AG04450 (cell line): ENCODE measurements at regions of chr6 and their contacts with region 1.

Region 1: GRCh38 chr6:30357678-30358540 is 13.0 kb downstream of the RPP21 start:
- DNase-seq: peak; percentile 36
- H3K4me3 ChIP-seq: peak overlapping the region; percentile 58
- H3K27ac ChIP-seq: no peak overlapping the region
- H3K27me3 ChIP-seq: peaks cover 48% of the 10 kb centered on the region
- CTCF ChIP-seq: peak; percentile 82

Region 2: DNA sequence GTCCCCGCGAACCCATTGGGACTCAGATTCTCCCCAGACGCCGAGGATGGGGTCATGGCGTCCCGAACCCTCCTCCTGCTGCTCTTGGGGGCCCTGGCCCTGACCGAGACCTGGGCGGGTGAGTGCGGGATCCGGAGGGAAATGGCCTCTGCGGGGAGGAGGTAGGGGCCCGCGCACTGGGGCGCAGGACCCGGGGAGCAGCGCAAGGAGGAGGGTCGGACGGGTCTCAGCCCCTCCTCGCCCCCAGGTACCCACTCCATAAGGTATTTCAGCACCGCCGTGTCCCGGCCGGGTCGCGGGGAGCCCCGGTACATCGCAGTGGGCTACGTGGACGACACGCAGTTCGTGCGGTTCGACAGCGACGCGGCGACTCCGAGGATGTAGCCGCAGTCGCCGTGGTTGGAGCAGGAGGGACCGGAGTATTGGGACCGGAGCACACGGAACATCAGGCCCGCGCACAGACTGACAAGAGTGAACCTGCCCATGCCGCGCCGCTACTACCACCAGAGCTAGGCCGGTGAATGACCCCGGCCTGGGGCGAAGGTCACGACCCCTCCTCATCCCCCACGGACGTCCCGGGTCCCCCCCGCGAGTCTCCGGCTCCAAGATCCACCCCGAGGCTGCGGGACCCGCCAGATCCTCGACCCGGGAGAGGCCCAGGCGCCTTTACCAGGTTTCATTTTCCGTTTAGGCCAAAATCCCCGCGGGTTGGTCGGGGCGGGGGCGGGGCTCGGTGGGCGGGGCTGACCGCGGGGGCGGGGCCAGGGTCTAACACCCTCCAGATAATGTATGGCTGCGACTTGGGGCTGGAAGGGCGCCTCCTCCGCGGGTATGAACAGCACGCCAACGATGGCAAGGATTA is 431.3 kb before region 1 on chr6:
- CTCF ChIA-PET with region 1: no interaction called
- POLR2A ChIA-PET with region 1: no interaction called
- DNase-seq: no peak
- H3K4me3 ChIP-seq: peak overlapping the region; percentile 62
- H3K27ac ChIP-seq: no peak overlapping the region
- H3K27me3 ChIP-seq: peaks cover 7% of the 10 kb centered on the region
- CTCF ChIP-seq: no peak

Region 3: DNA sequence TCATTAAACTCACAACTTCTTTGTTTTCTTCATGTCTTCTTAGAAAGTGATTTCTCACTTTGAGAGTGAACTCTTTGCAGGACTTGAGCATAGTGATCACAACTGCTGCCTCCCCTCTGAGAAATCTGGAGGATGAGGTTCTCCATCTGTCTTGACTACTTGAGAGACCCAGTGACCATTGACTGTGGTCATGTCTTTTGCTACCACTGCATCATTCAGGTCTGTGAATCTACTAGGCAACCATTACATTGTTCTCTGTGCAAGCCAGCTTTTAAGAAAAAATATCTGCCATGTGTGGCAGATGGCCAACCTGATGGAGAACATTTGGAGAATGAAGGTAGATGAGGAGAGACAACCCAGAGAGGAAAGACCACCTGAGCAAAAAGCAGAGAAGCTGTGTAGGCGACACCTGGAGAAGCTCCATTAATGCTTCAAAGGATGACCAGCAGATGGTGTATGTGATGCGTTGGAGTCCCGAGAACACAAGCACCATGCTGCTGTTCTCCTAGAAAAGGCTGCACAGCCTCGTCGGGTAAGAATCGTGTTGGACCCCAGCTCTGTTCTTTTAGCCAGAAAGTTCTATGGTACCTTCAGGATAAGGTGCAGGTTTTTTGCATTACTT is 119.6 kb before region 1 on chr6:
- CTCF ChIA-PET with region 1: interaction called, 10 read pairs
- POLR2A ChIA-PET with region 1: no interaction called
- DNase-seq: no peak
- H3K4me3 ChIP-seq: no peak overlapping the region
- H3K27ac ChIP-seq: no peak overlapping the region
- H3K27me3 ChIP-seq: peaks cover 3% of the 10 kb centered on the region
- CTCF ChIP-seq: peak; percentile 54

Region 4: GRCh38 chr6:31087494-31088089 is 729.7 kb after region 1 on chr6:
- CTCF ChIA-PET with region 1: no interaction called
- POLR2A ChIA-PET with region 1: no interaction called
- DNase-seq: peak; percentile 64
- H3K4me3 ChIP-seq: no peak overlapping the region
- H3K27ac ChIP-seq: no peak overlapping the region
- H3K27me3 ChIP-seq: no peaks in the 10 kb centered on the region
- CTCF ChIP-seq: peak; percentile 76